Activated CD4-positive, alpha-beta memory T cell treated with anti-CD3 and anti-CD28 coated beads, Interleukin-2, amount 10 ng/mL, durations not matched to agents 7 days and 5 days (primary cell): ENCODE measurements at regions of chr18 and their contacts with region 1.

Region 1: DNA sequence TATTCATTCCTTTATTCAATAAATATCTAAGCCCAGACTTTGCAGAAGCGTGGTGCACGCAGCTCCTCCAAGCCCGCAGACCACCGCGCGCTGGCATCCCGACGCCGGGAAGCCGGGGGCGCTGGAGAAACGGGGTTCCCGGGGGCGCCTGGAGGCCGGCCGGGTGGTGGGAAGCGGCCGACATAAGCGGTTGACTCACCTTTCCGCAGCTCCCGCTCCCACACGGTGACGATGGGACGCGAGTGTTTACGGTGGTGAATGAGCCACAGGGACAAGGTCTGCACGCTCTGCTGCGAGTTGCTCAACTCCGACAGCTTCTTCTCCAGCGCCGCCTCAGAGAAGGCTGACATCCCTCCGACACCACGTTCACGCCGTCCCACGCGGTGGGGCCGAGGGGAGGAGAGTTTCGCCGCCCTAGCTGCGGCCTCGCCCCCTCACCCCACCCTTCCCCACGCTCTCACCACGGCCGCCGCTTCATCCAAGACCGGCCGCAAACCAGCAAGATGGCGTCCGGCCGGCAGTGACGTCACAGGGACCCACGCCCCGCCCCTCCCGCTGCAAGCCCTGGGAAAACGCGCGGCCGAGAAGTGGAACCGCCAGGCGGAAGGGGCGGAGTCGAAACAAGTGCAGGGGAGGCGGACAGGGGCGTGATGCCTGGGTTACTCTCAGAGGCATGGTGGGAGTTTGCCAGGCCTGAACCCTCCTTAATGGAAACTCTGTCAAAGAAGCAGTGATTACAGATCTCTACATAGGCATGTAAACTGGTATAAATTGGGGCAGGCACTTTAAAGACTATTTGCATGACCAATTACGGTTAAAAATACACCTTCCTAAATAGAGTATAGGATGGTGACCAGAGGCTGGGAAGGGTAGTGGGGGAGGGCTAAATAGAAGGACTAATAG is at the start of gene RPRD1A:
- DNase-seq: peak; percentile 97
- H3K4me3 Mint-ChIP-seq: peak within 1 kb of the TSS; percentile 92
- H3K27ac Mint-ChIP-seq: peak within 1 kb of the TSS; percentile 83
- H3K4me1 Mint-ChIP-seq: peaks cover 32% of the 10 kb centered on the region
- H3K27me3 Mint-ChIP-seq: peaks cover 3% of the 10 kb centered on the region
- total RNA-seq, gene RPRD1A: 25.1 to 27.6 TPM

Region 2: DNA sequence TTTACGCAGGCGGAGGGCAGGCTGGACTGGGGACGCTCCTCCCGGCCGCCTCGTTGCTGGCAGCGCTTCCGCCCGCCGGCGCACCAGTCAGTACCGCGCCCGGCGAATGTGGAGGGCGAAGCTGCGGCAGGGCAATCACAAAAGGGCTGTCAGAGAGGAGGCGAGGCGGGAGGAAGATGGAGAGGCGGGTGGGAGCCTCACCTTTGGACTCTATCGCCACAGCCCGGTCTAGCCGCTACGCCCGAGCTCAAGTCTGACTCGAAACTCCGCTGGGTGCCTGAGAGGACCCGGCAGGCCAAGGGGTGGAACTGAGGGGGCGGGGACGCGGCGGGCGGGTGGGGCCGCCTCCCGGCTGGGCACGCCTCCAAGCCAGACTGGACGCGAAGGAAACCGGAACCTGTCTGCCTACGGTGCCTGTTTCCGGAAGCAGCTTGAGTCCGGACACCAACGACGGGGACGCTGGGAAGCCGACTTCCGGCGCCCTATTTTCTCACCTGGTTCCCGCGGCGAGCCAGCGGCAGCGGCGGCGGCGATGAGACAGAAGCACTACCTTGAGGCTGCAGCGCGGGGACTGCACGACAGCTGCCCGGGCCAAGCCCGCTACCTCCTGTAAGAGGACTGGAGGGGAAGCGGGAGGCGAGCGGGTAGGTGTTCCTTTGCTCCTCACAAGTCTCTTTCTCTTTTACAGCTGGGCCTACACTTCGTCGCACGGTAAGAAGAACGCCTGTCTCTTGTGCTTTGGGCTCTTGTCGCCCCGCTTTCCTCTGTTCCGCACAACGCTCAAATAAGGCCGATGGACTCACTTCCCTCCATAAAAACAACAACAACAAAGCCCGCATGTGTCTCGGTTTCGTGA is 94.9 kb before region 1 on chr18 and contains the start of gene RMP24:
- CTCF ChIA-PET with region 1: no interaction called
- POLR2A ChIA-PET with region 1: interaction called, 14 read pairs
- DNase-seq: peak; percentile 95
- H3K4me3 Mint-ChIP-seq: peak within 1 kb of the TSS; percentile 94
- H3K27ac Mint-ChIP-seq: peak within 1 kb of the TSS; percentile 94
- H3K4me1 Mint-ChIP-seq: peaks cover 49% of the 10 kb centered on the region
- H3K27me3 Mint-ChIP-seq: no peaks in the 10 kb centered on the region

Region 3: GRCh38 chr18:36335476-36336279 is 268.4 kb after region 1 on chr18:
- CTCF ChIA-PET with region 1: no interaction called
- POLR2A ChIA-PET with region 1: no interaction called
- DNase-seq: no peak
- H3K4me3 Mint-ChIP-seq: no peak overlapping the region
- H3K27ac Mint-ChIP-seq: no peak overlapping the region
- H3K4me1 Mint-ChIP-seq: no peaks in the 10 kb centered on the region
- H3K27me3 Mint-ChIP-seq: no peaks in the 10 kb centered on the region